ENCODE measurements at regions of chr6 and their contacts with region 1.

Region 1: DNA sequence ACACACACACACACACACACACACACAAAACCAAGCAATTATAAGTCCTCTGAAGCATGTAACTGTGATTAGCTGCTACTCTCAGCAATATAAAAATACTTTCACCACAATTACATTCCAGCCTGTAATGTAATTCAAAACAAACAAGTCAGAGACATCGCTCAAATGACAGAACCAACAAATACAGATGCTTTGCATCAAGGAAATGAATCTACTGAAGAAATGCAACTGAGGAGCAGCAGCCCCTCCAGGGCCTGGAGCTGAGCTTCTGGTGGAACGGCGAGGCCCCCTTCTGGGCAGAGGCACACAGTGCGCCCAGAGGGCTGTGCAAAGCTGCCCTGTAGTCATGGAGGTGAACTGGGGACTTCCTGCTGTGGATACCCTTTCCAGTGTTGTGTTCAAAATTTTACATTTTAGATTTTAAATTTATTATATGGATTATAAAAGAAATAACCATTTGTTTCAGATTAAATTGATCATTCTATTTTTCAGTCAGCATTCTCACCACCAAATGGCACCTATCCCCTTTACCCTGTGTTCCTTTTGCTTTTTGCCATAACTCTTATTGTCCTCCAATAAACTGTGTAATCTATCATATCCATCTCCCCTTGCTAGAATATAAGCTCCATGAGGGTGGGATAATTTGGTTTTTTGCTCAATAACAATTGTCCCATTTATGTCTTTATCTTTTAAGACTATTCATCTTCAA is 23.2 kb downstream of the ADAT2 start:
- DNase-seq: peak; percentile 79
- H3K4me3 ChIP-seq: no peak overlapping the region
- H3K27ac ChIP-seq: no peak overlapping the region
- H3K27me3 ChIP-seq: no peaks in the 10 kb centered on the region
- CTCF ChIP-seq: peak; percentile 99

Region 2: DNA sequence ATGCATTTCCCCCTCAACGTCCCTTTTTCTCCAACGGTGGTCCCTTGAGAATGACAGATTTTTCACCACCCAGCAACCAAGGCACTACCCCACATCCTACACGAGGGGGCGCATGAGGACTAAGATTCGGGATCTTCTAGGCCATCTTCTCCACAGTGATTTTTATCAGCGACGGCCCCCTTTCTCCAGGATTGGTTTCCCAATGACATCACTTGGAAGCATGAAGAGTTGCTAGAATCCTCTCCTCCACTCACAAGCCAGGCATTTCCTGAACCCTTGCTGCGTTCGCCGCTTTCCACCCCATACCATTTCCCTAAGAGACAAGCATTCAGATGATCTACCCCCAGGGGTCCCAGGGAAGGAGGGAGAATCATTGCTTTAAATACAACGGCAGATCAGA is 734.3 kb before region 1 on chr6:
- CTCF ChIA-PET with region 1: interaction called, 60 read pairs
- POLR2A ChIA-PET with region 1: no interaction called
- DNase-seq: peak; percentile 74
- H3K4me3 ChIP-seq: no peak overlapping the region; the same call in 1 of the 2 replicates
- H3K27ac ChIP-seq: peak overlapping the region; percentile 58
- H3K27me3 ChIP-seq: no peaks in the 10 kb centered on the region
- CTCF ChIP-seq: peak; percentile 95

Region 3: DNA sequence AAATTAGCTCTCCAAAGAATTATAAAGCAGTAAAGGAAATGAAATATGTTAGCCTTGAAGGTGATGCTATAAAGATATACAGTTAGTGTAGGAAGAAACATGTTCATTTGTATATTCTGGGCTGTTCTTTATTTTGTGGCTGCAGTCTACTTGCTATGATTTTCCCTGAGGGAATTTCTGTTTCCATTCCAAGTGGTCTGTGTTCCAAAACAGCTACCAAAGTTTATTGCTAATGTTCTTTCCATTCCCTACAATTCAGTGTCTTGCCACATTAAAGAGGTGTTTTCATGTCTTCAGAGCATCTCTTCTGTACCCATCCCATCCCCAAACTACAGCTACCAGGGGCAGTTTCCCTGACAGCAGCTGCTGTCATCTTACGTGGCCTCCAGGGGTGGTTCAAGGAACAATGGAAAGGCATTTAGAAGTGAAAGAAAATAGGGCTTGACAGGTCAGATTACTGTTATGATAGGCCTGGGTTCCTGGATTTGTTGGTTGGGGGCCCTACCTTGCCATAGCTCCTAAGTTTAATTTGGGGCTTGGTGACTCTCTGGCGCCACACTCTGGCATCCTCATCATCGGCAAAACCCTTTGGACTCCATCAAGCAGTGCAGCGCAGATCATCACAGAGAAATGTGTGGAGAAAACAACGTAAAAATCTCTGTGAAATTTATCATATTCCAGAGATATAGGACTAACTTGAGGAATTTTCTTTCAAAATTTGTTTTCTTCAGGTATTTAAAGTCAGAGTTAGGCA is 400.4 kb before region 1 on chr6:
- CTCF ChIA-PET with region 1: interaction called, 18 read pairs
- POLR2A ChIA-PET with region 1: no interaction called
- DNase-seq: no peak
- H3K4me3 ChIP-seq: no peak overlapping the region
- H3K27ac ChIP-seq: no peak overlapping the region
- H3K27me3 ChIP-seq: no peaks in the 10 kb centered on the region
- CTCF ChIP-seq: peak; percentile 59

Region 4: DNA sequence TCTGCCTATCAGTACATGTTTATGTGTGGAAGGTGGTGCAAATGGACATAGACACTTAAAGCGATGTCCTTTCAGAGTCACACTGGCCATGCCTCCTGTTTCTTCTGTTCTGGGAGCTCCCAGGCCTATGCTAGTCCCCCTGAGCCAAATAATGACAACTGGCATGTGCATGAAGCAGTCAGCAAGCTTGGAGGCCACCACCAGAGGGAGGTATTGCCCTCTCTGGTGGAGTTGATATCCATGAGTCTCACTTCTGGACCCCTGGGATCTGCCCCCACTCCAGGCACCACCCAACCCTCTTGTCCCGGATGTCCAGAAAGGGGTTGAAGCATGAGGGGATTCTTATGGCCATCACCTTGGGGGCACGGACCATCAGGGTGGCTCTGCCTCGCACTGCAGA is 194.4 kb before region 1 on chr6:
- CTCF ChIA-PET with region 1: interaction called, 19 read pairs
- POLR2A ChIA-PET with region 1: no interaction called
- DNase-seq: no peak
- H3K4me3 ChIP-seq: no peak overlapping the region
- H3K27ac ChIP-seq: no peak overlapping the region
- H3K27me3 ChIP-seq: no peaks in the 10 kb centered on the region
- CTCF ChIP-seq: peak; percentile 58

Region 5: GRCh38 chr6:143414769-143415168 is 12.5 kb before region 1 on chr6:
- CTCF ChIA-PET with region 1: interaction called, 19 read pairs
- POLR2A ChIA-PET with region 1: no interaction called
- DNase-seq: no peak
- H3K4me3 ChIP-seq: no peak overlapping the region
- H3K27ac ChIP-seq: no peak overlapping the region
- H3K27me3 ChIP-seq: no peaks in the 10 kb centered on the region
- CTCF ChIP-seq: no peak

Region 6: DNA sequence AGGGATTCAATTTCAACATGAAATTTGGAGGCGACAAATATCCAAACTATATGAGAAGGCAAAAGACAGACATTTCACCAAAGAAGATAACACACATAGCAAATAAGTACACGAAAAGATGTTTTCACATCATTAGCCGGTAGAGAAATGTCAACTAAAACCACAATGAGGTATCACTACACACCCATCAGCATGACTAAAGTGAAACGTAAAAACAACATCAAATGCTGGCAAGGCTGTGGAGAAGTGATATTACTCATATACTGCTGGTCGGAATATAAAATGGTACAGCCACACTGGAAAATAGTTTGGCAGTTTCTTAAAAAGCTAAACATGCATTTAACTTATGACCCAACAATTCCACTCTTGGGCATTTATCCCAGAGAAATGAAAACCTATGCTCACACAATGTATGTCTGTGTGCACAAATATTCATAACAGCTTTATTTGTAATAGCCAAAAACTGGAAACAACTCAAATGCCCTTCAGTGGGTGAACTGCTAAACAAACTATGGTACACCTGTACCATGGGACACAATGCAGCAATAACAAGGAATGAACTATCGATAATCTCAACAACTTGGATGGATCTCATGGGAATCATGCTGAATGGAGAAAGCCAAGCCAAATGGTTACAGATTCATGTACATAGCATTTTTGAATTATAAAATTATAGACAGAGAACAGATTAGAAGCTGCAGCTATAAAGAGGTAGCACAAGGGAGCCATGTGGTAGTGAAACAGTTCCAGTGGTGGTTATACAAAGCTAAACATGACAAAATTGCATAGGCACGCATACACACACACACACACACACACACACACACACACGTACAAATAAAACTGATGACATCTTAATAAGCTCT is 14.7 kb after region 1 on chr6:
- CTCF ChIA-PET with region 1: interaction called, 15 read pairs
- POLR2A ChIA-PET with region 1: interaction called, 3 read pairs
- DNase-seq: peak; percentile 36
- H3K4me3 ChIP-seq: no peak overlapping the region
- H3K27ac ChIP-seq: no peak overlapping the region
- H3K27me3 ChIP-seq: no peaks in the 10 kb centered on the region
- CTCF ChIP-seq: no peak

Region 7: GRCh38 chr6:143634493-143634892 is 207.2 kb after region 1 on chr6:
- CTCF ChIA-PET with region 1: no interaction called
- POLR2A ChIA-PET with region 1: no interaction called
- DNase-seq: no peak
- H3K4me3 ChIP-seq: no peak overlapping the region
- H3K27ac ChIP-seq: no peak overlapping the region
- H3K27me3 ChIP-seq: no peaks in the 10 kb centered on the region
- CTCF ChIP-seq: no peak

Measured in AG04450 (cell line).